ENCODE measurements at regions of chr11 and their contacts with region 1.

Region 1: GRCh38 chr11:102794447-102794781 is 3.5 kb downstream of the MMP1 start:
- DNase-seq: peak in 1 of 2 experiments; percentile 58
- H3K4me3 ChIP-seq: no peak overlapping the region
- H3K27ac ChIP-seq: no peak overlapping the region
- H3K4me1 ChIP-seq: no peaks in the 10 kb centered on the region
- H3K27me3 ChIP-seq: peaks cover 0 to 1% (median 0%) of the 10 kb centered on the region in 4 experiments; a peak in 1 of 7 replicates
- CTCF ChIP-seq: peak; percentile 51 to 97 (median 81)
- EP300 ChIP-seq: peak in 1 of 2 experiments; percentile 26; a peak in 1 of 3 replicates
- POLR2A ChIP-seq: no peak
- RAD21 ChIP-seq: peak; percentile 67 to 76

Region 2: DNA sequence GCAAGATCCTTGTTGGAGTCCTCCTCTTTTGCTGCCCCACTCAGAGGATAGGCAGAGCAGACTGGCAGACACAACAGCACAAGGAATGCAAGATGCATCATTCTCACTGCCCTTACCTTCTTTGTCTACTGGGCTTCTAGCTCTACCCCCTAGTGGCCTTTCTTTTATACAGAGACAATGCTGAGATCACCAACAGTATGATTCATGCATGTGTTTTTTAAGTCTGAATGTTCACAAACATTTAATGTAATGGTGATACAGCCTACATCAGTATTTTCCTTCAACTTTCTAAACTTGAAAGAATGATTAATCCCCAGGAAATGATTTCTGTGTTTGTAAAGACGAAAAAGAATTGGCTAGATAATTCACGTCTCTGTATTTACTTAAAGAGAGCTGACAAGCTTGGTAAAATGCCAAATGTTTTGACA is 13.9 kb before region 1 on chr11 and contains the start of gene MMP10:
- CTCF ChIA-PET with region 1: interaction called, 57 read pairs
- POLR2A ChIA-PET with region 1: no interaction called
- DNase-seq: peak in 1 of 2 experiments; percentile 27
- H3K4me3 ChIP-seq: no peak within 1 kb of the TSS
- H3K27ac ChIP-seq: no peak within 1 kb of the TSS
- H3K4me1 ChIP-seq: peaks cover 0 to 3% (median under 1%) of the 10 kb centered on the region in 4 experiments; a peak in 2 of 7 replicates
- H3K27me3 ChIP-seq: no peaks in the 10 kb centered on the region
- CTCF ChIP-seq: peak in 2 of 3 experiments; percentile 11 to 62; a peak in 2 of 4 replicates
- EP300 ChIP-seq: no peak
- POLR2A ChIP-seq: no peak
- RAD21 ChIP-seq: peak in 1 of 2 experiments; percentile 34; a peak in 1 of 4 replicates
- total RNA-seq, gene MMP10: 0.17 TPM in 1 of 2 replicates, not detected in the other

Region 3: DNA sequence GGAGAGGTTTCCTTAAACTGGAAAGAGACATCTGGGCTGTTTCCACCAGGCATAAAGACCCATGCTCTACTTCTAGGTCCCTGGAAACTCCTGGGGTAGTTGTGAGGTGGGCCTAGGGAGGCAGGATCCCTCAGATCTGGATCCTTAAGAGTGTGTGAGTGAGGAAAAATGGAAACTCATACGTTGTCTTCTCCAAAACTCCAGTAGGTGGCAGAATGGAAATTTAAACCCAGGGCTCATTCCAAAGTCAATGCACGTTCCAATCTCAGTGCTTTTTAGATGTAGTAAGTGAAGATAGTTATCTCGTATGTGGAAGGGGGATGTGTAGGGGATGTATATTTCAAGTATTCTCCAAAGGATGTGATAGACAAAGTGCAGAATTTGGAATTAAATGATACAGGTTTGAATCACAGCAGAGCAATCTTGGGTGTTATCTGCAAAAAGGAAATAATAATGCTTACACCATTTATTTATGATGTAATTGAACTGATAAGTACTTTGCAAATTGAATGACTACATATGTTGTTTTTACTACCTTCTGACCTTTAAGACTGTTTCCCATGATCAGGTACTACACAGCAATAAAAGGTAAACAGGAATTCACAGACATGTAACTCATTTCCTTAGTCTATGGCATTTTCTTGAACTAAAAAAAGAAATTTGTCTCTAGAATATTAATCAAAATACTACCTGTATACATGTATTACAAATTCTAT is 16.7 kb after region 1 on chr11:
- CTCF ChIA-PET with region 1: interaction called, 12 read pairs
- POLR2A ChIA-PET with region 1: interaction called, 4 read pairs
- DNase-seq: no peak
- H3K4me3 ChIP-seq: no peak overlapping the region
- H3K27ac ChIP-seq: no peak overlapping the region
- H3K4me1 ChIP-seq: no peaks in the 10 kb centered on the region
- H3K27me3 ChIP-seq: no peaks in the 10 kb centered on the region
- CTCF ChIP-seq: peak in 2 of 3 experiments; percentile 43 to 60; a peak in 2 of 4 replicates
- EP300 ChIP-seq: no peak
- POLR2A ChIP-seq: no peak
- RAD21 ChIP-seq: peak; percentile 47 to 48; a peak in 3 of 4 replicates

Region 4: DNA sequence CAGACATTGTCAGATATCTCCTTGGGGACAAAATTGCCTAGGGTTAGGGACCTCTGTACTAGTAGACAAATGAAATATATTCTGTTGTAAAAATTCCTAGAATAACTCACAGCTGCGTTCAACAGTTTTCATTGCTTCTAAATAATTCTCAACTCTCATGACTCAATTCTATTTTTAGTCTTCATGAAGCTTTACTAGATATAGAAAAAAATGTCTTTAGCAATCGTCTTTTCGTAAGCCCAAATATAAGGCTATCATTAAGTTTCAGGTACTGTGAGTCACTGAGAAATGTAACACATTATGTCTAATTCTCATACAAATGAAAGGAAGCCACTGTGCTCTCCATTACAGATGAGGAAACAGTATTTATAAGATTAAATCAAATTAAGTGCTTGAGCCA is 73.9 kb after region 1 on chr11:
- CTCF ChIA-PET with region 1: no interaction called
- POLR2A ChIA-PET with region 1: no interaction called
- DNase-seq: no peak
- H3K4me3 ChIP-seq: no peak overlapping the region
- H3K27ac ChIP-seq: no peak overlapping the region
- H3K4me1 ChIP-seq: no peaks in the 10 kb centered on the region
- H3K27me3 ChIP-seq: no peaks in the 10 kb centered on the region
- CTCF ChIP-seq: no peak
- EP300 ChIP-seq: no peak
- POLR2A ChIP-seq: no peak
- RAD21 ChIP-seq: no peak